Caco-2 (cell line): ENCODE measurements at regions of chr3 and their contacts with region 1.

Region 1: GRCh38 chr3:73100741-73101559 is 39.5 kb downstream of the EBLN2 start:
- DNase-seq: peak; percentile 84 to 87
- H3K4me3 ChIP-seq: no peak overlapping the region
- H3K4me3 Mint-ChIP-seq: peak overlapping the region; percentile 29
- H3K27ac Mint-ChIP-seq: peak overlapping the region; percentile 80
- H3K4me1 ChIP-seq: peaks cover 11% of the 10 kb centered on the region
- H3K4me1 Mint-ChIP-seq: peaks cover 29% of the 10 kb centered on the region
- H3K27me3 ChIP-seq: no peaks in the 10 kb centered on the region
- H3K27me3 Mint-ChIP-seq: no peaks in the 10 kb centered on the region
- CTCF ChIP-seq: peak; percentile 86 to 88

Region 2: DNA sequence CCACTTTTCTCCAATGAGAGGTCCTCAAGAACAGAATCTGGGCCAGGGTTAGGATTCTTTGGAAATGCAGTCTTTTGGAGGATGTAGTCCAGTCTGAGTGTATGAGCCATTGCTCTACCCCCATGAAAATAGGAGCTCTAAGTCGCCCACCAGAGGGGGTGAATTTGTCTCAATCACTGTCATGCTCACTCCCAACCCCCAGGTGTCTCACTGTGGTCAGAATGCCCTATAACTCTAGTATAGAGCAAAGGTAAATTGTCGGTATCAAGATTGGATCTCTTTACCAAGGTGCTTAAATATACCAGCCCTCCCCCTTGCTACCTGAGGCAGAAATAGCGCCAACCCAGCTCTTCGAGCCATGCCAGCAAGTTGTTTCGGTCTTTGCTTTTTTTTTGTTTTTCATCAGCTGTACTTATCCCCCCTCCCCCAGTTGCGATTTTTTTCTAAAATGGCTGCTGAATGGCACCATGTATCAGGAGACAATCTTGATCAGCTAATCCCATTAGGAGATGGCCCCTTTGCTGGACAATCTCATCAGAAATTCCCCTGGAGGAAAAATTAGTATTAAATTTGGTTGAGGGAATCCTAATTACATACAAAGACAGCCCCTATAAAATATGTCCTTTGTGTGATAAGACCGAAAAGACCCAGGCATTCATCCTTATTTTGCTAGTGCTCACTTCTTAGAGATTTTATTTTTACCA is 91.2 kb after region 1 on chr3:
- CTCF ChIA-PET with region 1: no interaction called
- POLR2A ChIA-PET with region 1: no interaction called
- intact Hi-C with region 1: loop called (anchors 1 kb)
- DNase-seq: peak; percentile 56 to 58
- H3K4me3 ChIP-seq: no peak overlapping the region
- H3K4me3 Mint-ChIP-seq: no peak overlapping the region
- H3K27ac Mint-ChIP-seq: no peak overlapping the region
- H3K4me1 ChIP-seq: no peaks in the 10 kb centered on the region
- H3K4me1 Mint-ChIP-seq: no peaks in the 10 kb centered on the region
- H3K27me3 ChIP-seq: no peaks in the 10 kb centered on the region
- H3K27me3 Mint-ChIP-seq: no peaks in the 10 kb centered on the region
- CTCF ChIP-seq: peak; percentile 57 to 66

Region 3: GRCh38 chr3:73389117-73389813 is 288.3 kb after region 1 on chr3:
- CTCF ChIA-PET with region 1: no interaction called
- POLR2A ChIA-PET with region 1: no interaction called
- intact Hi-C with region 1: loop called (anchors 1 kb)
- DNase-seq: no peak
- H3K4me3 ChIP-seq: no peak overlapping the region
- H3K4me3 Mint-ChIP-seq: no peak overlapping the region
- H3K27ac Mint-ChIP-seq: no peak overlapping the region
- H3K4me1 ChIP-seq: no peaks in the 10 kb centered on the region
- H3K4me1 Mint-ChIP-seq: no peaks in the 10 kb centered on the region
- H3K27me3 ChIP-seq: no peaks in the 10 kb centered on the region
- H3K27me3 Mint-ChIP-seq: no peaks in the 10 kb centered on the region
- CTCF ChIP-seq: no peak

Region 4: DNA sequence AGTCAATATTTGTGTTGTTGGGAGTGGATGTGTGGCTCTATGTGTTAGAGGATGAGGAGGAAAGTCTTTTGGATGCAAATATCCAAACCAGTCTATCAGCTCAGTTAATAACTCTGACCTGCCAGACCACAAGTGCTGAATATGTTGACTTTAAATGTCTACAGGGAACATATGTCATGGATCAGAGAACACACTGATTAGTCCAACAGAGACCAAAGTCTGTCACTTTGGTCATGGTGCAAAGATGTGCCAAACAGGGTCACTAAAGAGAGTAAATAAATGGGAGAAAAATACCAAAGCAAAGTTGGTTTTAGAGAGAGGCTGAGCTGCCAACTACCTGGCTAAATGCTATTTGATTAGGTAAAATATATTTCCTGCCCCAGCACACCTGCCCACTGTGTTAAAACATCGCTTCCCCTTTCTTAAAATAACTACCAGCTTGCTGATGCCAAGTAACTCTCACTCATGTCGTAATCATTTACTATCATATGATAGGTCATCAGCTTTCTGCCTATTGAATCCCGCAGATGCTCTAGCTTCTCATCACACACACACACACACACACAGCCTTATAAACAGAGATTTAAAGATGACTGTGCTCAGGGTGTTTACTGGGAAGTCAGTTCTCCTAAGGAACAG is 350.5 kb after region 1 on chr3:
- CTCF ChIA-PET with region 1: no interaction called
- POLR2A ChIA-PET with region 1: no interaction called
- intact Hi-C with region 1: loop called (anchors 5 kb)
- DNase-seq: no peak
- H3K4me3 ChIP-seq: no peak overlapping the region
- H3K4me3 Mint-ChIP-seq: no peak overlapping the region
- H3K27ac Mint-ChIP-seq: no peak overlapping the region
- H3K4me1 ChIP-seq: peaks cover 21% of the 10 kb centered on the region
- H3K4me1 Mint-ChIP-seq: peaks cover 17% of the 10 kb centered on the region
- H3K27me3 ChIP-seq: no peaks in the 10 kb centered on the region
- H3K27me3 Mint-ChIP-seq: no peaks in the 10 kb centered on the region
- CTCF ChIP-seq: no peak